Posterior vena cava (tissue), 2 donors: ENCODE measurements at regions of chr7 and their contacts with region 1.

Region 1: DNA sequence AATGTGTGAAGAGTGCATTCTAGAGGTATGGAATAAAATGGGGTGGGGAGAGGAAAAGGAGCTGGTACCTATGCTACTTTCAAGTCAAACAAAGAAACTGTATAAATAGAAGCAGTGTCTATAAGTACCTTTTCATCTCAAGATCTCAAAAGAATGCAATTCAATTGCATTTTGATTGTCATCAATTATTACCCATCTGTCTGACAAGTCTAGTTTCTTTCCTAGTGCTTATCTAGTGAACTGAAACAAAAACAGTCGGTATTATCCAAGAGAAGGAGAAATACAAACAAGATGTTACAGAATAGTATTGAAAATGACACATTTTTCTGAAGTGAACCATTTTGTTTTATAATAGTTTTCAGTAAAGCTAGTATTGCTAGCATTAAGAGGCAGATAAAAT is 754.5 kb upstream of the LRRN3 start:
- DNase-seq: no peak

Region 2: DNA sequence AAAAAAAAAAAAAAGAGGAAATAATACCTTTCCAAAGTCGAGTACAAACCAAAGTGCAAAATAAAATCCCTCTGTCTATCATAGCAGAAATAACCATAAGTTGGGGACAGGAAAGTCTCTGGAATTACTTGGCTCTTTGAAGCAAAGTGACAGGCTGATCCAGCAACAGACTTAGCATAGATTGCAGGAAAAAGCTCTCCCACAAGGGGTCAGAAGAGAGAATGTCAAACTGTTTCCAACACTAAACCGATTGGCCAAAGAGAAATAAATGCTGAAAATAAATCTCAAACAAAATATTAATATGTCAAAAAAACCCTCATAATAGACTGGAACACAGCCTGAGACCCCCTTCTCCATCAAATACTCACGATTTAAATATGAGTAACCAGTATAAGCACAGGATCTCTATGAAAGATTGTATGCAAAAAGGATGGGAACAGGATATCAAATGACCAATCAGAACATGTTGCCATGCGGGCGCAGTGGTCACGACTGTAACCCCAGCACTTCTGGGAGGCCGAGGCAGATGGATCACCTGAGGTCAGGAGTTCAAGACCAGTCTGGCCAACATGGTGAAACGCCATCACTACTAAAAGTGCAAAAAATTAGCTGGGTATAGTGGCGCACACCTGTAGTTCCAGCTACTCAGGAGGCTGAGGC is 246.2 kb before region 1 on chr7:
- intact Hi-C with region 1: loop called in 1 of 2 experiments (anchors 5 kb)
- DNase-seq: peak; percentile 76

Region 3: GRCh38 chr7:110130669-110131068 is 205.8 kb before region 1 on chr7:
- intact Hi-C with region 1: no loop called
- DNase-seq: no peak

Region 4: GRCh38 chr7:110317541-110318275 is 18.7 kb before region 1 on chr7:
- intact Hi-C with region 1: loop called in 1 of 2 experiments (anchors 2 kb)
- DNase-seq: no peak

Region 5: DNA sequence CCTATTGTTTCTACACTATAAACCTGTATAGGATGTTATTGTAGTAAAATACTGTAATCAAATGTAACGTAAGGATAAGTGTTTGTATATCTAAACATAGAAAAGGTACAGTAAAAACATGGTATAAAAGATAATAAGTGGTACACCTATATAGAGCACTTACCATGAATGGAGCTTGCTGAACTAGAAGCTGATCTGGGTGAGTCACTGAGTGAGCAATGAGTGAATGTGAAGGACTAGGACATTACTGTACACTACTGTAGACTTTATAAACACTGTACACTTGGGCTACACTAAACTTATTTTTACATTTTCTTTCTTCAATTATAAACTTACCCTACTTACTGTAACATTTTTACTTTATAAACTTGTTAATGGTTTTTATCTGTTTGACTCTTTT is 21.6 kb after region 1 on chr7:
- intact Hi-C with region 1: no loop called
- DNase-seq: no peak